OCI-LY7 (cell line): ENCODE measurements at regions of chr6 and their contacts with region 1.

Region 1: GRCh38 chr6:156976216-156977127 is 199.3 kb downstream of the ARID1B start:
- DNase-seq: peak; percentile 86
- H3K4me3 ChIP-seq: peak overlapping the region; percentile 66
- H3K27ac ChIP-seq: peak overlapping the region; percentile 88
- H3K4me1 ChIP-seq: peaks cover 86% of the 10 kb centered on the region
- CTCF ChIP-seq: no peak

Region 2: DNA sequence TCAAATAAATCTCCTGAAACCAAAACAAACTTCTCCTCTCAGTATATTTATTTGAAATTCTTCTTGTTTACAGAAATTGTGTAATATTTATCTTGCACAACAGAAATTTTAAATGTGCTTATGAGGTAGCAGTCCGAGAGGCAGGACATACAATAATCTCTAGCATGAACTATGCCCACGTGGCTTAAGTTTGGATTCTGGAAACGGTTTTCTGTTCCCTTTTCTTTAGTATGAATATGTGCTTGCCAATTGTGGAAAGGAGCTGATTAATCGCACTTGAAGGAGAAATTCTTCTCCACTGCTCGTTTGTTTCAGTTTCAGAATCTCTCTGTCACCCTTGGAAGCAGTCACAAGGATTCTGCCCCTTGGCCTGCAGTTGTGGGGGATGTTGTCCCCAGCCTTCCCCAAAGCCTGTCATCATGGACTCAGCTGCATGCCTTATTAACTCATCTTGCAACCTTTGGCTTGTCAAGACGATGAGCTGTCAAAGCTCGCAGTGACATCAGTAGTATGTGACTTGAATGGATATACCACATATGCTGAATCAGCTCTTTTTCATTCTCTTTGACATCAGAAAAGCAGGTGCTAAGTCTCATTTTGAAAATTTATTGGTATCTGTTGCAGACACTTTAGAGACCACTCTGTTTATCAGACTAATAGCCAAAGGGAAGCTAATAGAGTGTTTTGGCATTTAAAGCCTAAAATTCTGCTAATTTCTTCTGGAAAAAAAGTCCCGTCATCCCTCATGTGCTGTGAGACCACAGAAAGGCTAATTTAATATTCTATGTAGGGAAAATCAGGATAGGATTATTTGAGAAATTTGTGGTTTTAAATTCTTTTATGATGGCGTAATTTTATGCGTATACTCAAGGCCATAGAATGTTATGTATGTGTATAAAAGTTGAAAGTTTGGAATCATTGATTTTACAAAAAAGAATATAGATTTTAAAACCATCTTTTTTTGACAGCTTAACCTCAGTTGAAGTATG is 12.5 kb before region 1 on chr6:
- CTCF ChIA-PET with region 1: no interaction called
- POLR2A ChIA-PET with region 1: interaction called, 21 read pairs
- intact Hi-C with region 1: no loop called
- DNase-seq: peak; percentile 34
- H3K4me3 ChIP-seq: peak overlapping the region; percentile 40
- H3K27ac ChIP-seq: no peak overlapping the region
- H3K4me1 ChIP-seq: peaks cover 14% of the 10 kb centered on the region
- CTCF ChIP-seq: no peak

Region 3: DNA sequence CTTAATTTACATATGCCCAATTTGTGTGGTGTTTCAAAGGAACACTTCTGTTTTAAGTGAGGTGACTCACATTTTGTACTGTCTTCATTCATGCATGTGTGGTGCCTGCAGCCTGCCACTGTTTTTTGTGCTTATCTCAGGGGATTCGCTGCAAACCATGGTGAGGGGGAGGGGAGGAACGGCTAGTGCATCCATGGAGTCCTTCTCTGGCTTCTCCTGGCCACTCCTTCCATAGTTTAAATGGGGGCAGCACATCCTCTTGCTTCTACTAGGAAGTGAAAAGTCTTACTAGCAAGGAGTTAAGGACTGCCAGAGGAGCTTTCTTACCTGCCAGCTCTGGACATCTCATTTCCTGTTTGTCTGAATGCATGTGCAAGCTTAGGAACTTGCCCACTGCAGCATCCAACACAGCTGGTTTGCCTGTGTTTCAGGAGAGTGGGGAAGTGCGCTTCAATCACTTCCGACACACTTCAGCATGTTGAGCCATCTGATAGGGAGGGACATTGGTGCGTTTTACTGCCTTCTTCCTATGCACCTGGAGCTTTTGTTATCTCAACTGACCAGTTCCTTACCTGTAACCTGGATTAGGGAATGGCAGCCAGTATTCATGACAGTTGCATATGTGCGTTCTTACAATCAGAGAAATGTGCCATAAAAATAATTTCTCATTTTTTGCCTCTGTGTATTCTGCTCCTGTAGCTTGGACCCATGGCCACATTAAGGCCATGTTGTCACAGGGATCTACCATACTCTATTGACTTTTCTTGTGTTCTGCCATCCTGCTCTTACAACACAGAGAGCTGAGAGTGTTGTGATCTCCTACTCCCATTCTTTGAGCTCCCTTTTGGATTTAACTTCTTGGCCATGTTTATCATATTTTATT is 12.0 kb after region 1 on chr6:
- CTCF ChIA-PET with region 1: no interaction called
- POLR2A ChIA-PET with region 1: interaction called, 19 read pairs
- intact Hi-C with region 1: no loop called
- DNase-seq: peak; percentile 94
- H3K4me3 ChIP-seq: peak overlapping the region; percentile 64
- H3K27ac ChIP-seq: peak overlapping the region; percentile 99
- H3K4me1 ChIP-seq: peaks cover 89% of the 10 kb centered on the region
- CTCF ChIP-seq: no peak